ENCODE measurements at regions of chr1 and their contacts with region 1.

Region 1: DNA sequence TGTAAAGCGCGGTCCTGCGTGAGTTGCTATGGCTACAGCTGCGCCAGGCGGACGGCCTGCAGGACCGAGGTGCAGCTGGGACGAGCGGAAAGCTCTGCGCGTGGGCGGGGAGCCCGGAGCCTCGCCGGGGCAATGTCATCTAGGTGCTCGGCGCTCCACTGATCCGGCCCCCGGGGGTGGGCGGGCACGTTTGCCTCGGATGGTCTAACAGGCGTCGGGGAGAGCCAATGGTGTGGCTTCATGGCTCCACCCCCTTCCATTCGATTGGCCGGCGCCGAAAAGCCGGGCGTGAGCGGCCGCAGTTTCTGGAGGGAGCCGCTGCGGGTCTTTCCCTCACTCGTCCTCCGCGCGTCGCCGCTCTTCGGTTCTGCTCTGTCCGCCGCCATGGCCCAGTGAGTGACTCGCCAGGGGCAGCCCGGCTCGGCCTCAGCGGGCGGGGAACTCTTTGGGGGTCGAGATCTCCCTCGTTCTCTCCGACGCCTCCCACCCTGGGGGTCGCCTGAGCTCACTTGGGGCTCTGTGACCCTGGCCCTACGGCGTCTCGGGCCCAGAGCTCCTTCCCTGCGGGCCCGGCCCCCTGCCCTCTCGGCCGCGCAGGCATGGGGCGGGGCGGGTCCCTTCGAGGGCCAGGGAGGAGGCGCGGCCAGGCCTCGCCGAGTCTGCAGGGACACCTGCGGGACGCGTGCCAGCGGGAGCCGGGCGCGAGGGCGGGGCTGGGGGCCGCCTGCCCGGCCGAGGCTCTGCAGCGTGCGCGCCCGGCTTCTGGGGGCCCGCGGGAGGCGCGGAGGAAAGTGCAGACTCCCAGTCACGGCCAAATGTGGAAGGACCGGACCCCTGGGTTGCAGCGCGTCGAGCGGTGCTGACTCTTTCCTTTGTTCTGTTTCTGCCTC is at the start of gene PGD:
- DNase-seq: peak; percentile 98
- H3K4me3 ChIP-seq: peak within 1 kb of the TSS; percentile 67 to 96 (median 95)
- H3K27ac ChIP-seq: peak within 1 kb of the TSS; percentile 76
- H3K4me1 ChIP-seq: peaks cover 35% of the 10 kb centered on the region
- H3K27me3 ChIP-seq: no peaks in the 10 kb centered on the region
- CTCF ChIP-seq: no peak
- POLR2A ChIP-seq: peak; percentile 87
- total RNA-seq, gene PGD: 303 and 307 TPM in 2 replicates

Region 2: GRCh38 chr1:10387413-10388079 is 11.4 kb before region 1 on chr1:
- CTCF ChIA-PET with region 1: interaction called, 32 read pairs
- POLR2A ChIA-PET with region 1: interaction called, 32 read pairs
- dilution Hi-C with region 1: no loop called
- intact Hi-C with region 1: loop called (anchors 1 kb)
- DNase-seq: peak; percentile 63
- H3K4me3 ChIP-seq: no peak overlapping the region
- H3K27ac ChIP-seq: peak overlapping the region; percentile 71
- H3K4me1 ChIP-seq: peaks cover 12% of the 10 kb centered on the region
- H3K27me3 ChIP-seq: no peaks in the 10 kb centered on the region
- CTCF ChIP-seq: no peak
- POLR2A ChIP-seq: no peak

Region 3: DNA sequence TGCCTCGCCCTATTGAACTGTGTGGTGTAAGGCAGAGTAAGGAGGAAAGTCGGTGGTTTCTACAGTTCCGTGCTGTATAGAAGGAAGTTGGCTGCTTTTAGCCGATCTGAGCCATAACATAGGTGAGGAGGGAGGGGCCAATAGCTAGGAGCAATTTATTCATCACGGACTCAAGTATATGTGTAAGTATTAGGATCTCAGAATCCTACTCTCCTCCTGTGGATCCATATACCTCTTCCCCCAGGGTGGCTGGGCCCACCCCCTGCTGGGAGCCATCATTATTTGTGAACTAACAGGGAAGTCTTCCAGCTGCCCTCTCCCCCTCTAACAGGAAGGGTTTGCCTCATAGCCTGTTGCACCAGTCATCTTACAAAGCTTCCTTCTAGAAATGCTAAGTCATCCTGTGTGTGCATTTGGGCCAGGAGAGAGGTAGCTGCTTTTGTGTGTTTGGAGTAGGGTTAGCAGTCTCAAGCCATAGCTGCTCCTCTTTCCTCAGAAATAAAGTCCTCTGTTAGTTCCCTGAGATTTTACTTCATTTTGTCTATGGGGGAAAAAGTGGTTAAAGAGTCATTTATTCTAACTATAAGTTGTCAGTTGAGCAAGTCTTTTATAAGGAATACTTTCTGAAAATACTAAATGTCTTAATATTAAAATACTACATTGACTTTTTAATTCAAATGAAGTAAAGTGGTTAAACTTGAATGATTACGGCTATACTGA is 16.4 kb after region 1 on chr1:
- CTCF ChIA-PET with region 1: interaction called, 7 read pairs
- POLR2A ChIA-PET with region 1: interaction called, 10 read pairs
- dilution Hi-C with region 1: no loop called
- intact Hi-C with region 1: loop called (anchors 2 kb)
- DNase-seq: peak; percentile 84
- H3K4me3 ChIP-seq: no peak overlapping the region
- H3K27ac ChIP-seq: peak overlapping the region; percentile 92
- H3K4me1 ChIP-seq: peaks cover 17% of the 10 kb centered on the region
- H3K27me3 ChIP-seq: no peaks in the 10 kb centered on the region
- CTCF ChIP-seq: no peak
- POLR2A ChIP-seq: peak; percentile 40